CD4-positive, alpha-beta T cell (primary cell): ENCODE measurements at regions of chr15 and their contacts with region 1.

Region 1: DNA sequence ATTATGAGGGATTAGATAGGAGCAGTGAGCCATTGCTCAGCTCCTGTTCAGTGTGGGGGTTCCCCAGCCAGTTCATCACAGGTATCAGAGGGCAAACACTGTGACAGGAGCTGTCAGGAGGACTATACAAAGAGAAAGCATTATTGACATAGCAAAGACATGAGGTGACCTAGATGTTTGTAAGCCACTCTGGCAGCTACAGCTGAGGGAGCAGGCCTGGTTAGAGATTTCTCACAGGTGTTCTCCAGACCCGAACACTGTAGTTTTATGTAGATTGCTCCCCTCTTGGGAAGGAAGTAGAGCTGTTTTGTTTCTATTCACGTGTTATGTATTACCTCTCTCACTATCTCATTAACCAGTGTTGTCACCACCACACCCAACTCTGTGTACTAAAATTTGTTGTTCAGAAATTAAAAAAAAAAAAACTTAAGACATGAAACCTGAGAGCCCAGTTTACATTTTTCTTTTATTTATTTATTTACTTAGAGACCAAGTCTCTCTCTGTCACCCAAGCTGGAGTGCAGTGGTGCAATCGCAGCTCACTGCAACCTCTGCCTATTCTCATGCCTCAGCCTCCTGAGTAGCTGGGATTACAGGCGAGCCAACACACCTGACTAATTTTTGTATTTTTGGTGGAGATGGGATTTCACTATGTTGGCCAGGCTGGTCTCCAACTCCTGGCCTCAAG is 123.7 kb downstream of the RBPMS2 start:
- DNase-seq: peak in 13 of 14 experiments; percentile 9 to 78 (median 29)
- ATAC-seq: peak; percentile 92
- H3K4me3 ChIP-seq: no peak overlapping the region
- H3K4me3 Mint-ChIP-seq: peak overlapping the region; percentile 73
- H3K27ac ChIP-seq: peak overlapping the region; percentile 2 to 54
- H3K27ac Mint-ChIP-seq: peak overlapping the region; percentile 82
- H3K4me1 ChIP-seq: peaks cover 36% of the 10 kb centered on the region
- H3K4me1 Mint-ChIP-seq: peaks cover 64% of the 10 kb centered on the region
- H3K27me3 ChIP-seq: no peaks in the 10 kb centered on the region
- H3K27me3 Mint-ChIP-seq: no peaks in the 10 kb centered on the region
- CTCF ChIP-seq: no peak

Region 2: GRCh38 chr15:64387562-64388168 is 264.1 kb before region 1 on chr15 and contains the start of gene TRIP4:
- CTCF ChIA-PET with region 1: interaction called, 3 read pairs
- POLR2A ChIA-PET with region 1: interaction called, 12 read pairs
- intact Hi-C with region 1: loop called in 1 of 2 experiments (anchors 2 kb)
- DNase-seq: peak; percentile 94 to 98 (median 96)
- ATAC-seq: peak; percentile 99
- H3K4me3 ChIP-seq: peak within 1 kb of the TSS; percentile 76
- H3K4me3 Mint-ChIP-seq: peak within 1 kb of the TSS; percentile 98
- H3K27ac ChIP-seq: peak within 1 kb of the TSS in 1 of 2 donors; percentile 8
- H3K27ac Mint-ChIP-seq: peak within 1 kb of the TSS; percentile 81
- H3K4me1 ChIP-seq: peaks cover 26% of the 10 kb centered on the region
- H3K4me1 Mint-ChIP-seq: peaks cover 18% of the 10 kb centered on the region
- H3K27me3 ChIP-seq: no peaks in the 10 kb centered on the region
- H3K27me3 Mint-ChIP-seq: no peaks in the 10 kb centered on the region
- CTCF ChIP-seq: no peak
- total RNA-seq, gene TRIP4: 9.6 to 10.7 TPM

Region 3: DNA sequence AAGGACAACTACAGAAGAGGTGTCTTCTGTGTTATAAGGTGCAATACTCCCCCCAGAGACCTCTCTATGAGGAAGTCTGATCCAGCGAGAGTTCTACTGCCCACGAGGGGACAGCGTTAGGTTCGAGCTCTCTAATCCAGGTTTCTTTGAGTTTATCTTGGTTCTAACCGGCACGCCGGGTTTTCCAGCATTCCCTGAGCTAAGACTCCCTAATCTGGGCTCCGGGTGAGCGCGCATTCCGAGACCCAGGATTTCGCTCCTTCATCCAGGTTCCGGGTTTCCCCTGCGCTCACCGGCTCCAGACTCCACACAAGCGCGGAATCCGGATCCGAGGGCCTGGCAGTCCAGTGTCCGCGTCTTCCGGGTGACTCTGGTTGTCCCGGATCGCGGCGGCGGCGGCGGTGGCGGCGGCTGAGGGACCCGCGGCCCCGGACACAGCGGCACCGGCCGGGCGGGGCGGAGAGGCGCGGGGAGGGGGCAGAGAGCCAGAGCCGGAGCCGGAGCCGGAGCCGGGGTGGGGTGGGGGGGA is 191.4 kb before region 1 on chr15 and contains the start of gene ZNF609:
- CTCF ChIA-PET with region 1: interaction called, 3 read pairs
- POLR2A ChIA-PET with region 1: interaction called, 18 read pairs
- intact Hi-C with region 1: no loop called
- DNase-seq: peak; percentile 74 to 91 (median 86)
- ATAC-seq: peak; percentile 80
- H3K4me3 ChIP-seq: peak within 1 kb of the TSS; percentile 71
- H3K4me3 Mint-ChIP-seq: peak within 1 kb of the TSS; percentile 92
- H3K27ac ChIP-seq: peak within 1 kb of the TSS; percentile 52
- H3K27ac Mint-ChIP-seq: peak within 1 kb of the TSS; percentile 87
- H3K4me1 ChIP-seq: peaks cover 46% of the 10 kb centered on the region
- H3K4me1 Mint-ChIP-seq: peaks cover 88% of the 10 kb centered on the region
- H3K27me3 ChIP-seq: no peaks in the 10 kb centered on the region
- H3K27me3 Mint-ChIP-seq: no peaks in the 10 kb centered on the region
- CTCF ChIP-seq: no peak
- total RNA-seq, gene ZNF609: 62.4 to 65.3 TPM

Region 4: GRCh38 chr15:64596701-64597476 is 54.8 kb before region 1 on chr15:
- CTCF ChIA-PET with region 1: interaction called, 4 read pairs
- POLR2A ChIA-PET with region 1: interaction called, 17 read pairs
- intact Hi-C with region 1: no loop called
- DNase-seq: peak in 9 of 14 experiments; percentile 2 to 71 (median 23)
- ATAC-seq: peak; percentile 77
- H3K4me3 ChIP-seq: peak overlapping the region; percentile 37
- H3K4me3 Mint-ChIP-seq: peak overlapping the region; percentile 88
- H3K27ac ChIP-seq: peak overlapping the region; percentile 65 to 72
- H3K27ac Mint-ChIP-seq: peak overlapping the region; percentile 92
- H3K4me1 ChIP-seq: peaks cover 33% of the 10 kb centered on the region
- H3K4me1 Mint-ChIP-seq: peaks cover 68% of the 10 kb centered on the region
- H3K27me3 ChIP-seq: no peaks in the 10 kb centered on the region
- H3K27me3 Mint-ChIP-seq: no peaks in the 10 kb centered on the region
- CTCF ChIP-seq: no peak

Region 5: GRCh38 chr15:64634576-64635498 is 16.9 kb before region 1 on chr15:
- CTCF ChIA-PET with region 1: interaction called, 6 read pairs
- POLR2A ChIA-PET with region 1: interaction called, 22 read pairs
- intact Hi-C with region 1: loop called in 1 of 2 experiments (anchors 2 kb)
- DNase-seq: peak in 5 of 14 experiments; percentile 10 to 57 (median 42)
- ATAC-seq: peak; percentile 57
- H3K4me3 ChIP-seq: peak overlapping the region; percentile 22
- H3K4me3 Mint-ChIP-seq: peak overlapping the region; percentile 62
- H3K27ac ChIP-seq: peak overlapping the region in 1 of 2 donors; percentile 51
- H3K27ac Mint-ChIP-seq: peak overlapping the region; percentile 80
- H3K4me1 ChIP-seq: peaks cover 71% of the 10 kb centered on the region
- H3K4me1 Mint-ChIP-seq: peaks cover 82% of the 10 kb centered on the region
- H3K27me3 ChIP-seq: no peaks in the 10 kb centered on the region
- H3K27me3 Mint-ChIP-seq: no peaks in the 10 kb centered on the region
- CTCF ChIP-seq: no peak

Region 6: GRCh38 chr15:64673866-64674265 is 22.1 kb after region 1 on chr15:
- CTCF ChIA-PET with region 1: no interaction called
- POLR2A ChIA-PET with region 1: no interaction called
- intact Hi-C with region 1: no loop called
- DNase-seq: no peak
- ATAC-seq: no peak
- H3K4me3 ChIP-seq: no peak overlapping the region
- H3K4me3 Mint-ChIP-seq: no peak overlapping the region
- H3K27ac ChIP-seq: no peak overlapping the region
- H3K27ac Mint-ChIP-seq: no peak overlapping the region
- H3K4me1 ChIP-seq: no peaks in the 10 kb centered on the region
- H3K4me1 Mint-ChIP-seq: no peaks in the 10 kb centered on the region
- H3K27me3 ChIP-seq: no peaks in the 10 kb centered on the region
- H3K27me3 Mint-ChIP-seq: no peaks in the 10 kb centered on the region
- CTCF ChIP-seq: no peak